Psoas muscle (tissue), 8 donors: ENCODE measurements at regions of chr6 and their contacts with region 1.

Region 1: DNA sequence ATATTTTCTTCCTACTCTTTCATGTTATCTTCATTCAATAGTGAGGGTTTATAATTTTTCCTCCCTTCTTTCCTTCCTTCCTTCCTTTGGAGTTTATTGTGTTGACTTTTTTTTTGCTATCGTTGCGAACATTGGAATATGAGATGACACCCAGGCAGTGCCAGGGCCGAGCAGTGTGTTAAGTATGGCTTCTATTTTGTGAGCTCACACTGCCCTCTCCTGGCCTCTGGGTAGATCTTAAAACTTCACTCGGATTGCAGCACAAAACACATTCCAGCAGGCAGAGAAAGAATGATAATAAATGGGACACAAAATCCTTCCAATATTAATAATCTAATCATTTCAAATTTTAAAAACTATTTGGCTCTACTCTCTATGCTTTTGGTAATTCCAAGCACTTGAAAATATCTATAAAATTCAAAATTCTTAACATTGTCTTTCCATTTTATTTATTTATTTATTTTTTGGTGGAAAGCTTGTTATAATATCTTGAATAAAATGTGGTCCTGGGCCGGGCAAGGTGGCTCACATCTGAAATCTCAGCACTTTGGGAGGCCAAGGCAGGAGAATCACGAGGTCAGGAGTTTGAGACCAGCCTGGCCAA is 147.4 kb upstream of the OLIG3 start:
- DNase-seq: peak; percentile 55 to 77
- ATAC-seq: peak; percentile 88 to 97 (median 92)
- H3K4me3 ChIP-seq: no peak overlapping the region
- H3K27ac ChIP-seq: no peak overlapping the region
- H3K4me1 ChIP-seq: peaks cover 10% of the 10 kb centered on the region
- H3K27me3 ChIP-seq: no peaks in the 10 kb centered on the region
- CTCF ChIP-seq: peak; percentile 77

Region 2: DNA sequence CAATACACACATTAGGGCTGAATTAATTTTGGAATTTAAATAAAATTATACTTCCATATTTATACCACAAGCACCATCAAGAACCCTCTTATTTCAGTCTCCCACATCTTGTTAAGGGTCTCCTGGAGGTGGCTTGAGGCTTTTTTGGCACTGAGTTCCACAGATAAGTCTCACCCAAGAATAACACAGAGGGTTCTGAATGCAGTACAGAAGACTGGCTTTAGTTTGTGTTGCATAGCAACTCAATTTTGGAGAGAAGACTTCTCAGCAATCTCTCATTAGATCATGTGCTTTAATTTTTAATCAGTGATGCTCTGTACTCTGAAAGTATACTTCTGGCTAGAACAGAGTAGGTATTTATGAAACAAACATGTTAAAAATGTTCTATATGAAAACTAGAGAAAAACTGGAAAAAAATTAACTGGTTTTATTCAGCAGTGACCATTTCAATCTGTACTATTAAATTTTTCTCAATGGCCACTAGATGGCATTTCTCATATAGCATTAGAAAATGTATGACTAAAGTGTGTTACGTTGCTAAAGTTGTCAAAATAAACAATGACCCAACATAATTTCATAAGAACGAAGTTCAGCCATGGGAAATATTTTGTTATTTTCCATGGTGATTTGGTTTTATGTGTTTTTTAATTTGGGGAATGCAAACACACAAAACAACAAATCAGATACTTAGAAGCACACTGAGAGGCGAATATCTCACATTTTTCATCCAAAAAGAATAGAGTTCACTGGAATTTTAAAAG is 1058.7 kb before region 1 on chr6:
- intact Hi-C with region 1: loop called in 1 of 2 experiments (anchors 10 kb)
- DNase-seq: no peak
- ATAC-seq: peak in 2 of 4 donors; percentile 55 to 77
- H3K4me3 ChIP-seq: peak overlapping the region; percentile 16
- H3K27ac ChIP-seq: peak overlapping the region; percentile 60
- H3K4me1 ChIP-seq: peaks cover 25% of the 10 kb centered on the region
- H3K27me3 ChIP-seq: no peaks in the 10 kb centered on the region
- CTCF ChIP-seq: peak; percentile 65

Region 3: DNA sequence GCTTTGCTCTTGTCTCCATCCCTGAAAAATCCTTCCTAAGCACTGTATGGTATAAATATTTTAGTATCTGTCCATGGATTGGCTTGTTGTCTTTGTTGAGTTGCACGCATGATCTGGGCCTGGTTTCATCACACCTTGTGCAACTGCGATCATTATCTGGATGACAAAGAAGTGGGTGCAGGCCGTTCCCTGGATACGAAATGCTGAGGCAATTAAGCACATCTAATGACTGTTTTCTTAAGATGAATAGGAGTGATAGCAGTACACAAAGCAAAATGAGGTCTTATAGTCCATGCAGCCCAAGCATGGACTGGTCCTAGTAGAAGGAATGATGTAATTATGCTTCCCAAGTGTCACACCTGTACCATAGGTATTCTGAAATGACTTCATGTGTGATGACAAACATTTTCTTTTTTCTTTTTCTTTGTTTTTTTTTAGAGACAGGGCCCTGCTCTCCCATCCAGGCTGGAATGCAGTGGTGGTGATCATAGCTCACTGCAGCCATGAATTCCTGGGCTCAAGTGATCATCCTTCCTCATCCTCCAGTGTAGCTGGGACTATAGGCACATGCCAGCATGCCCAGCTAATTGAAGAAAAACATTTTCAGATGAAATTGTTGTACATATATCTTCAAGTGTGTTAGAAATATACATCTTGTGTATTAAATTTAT is 671.5 kb before region 1 on chr6:
- intact Hi-C with region 1: loop called in 1 of 2 experiments (anchors 5 kb)
- DNase-seq: no peak
- ATAC-seq: no peak
- H3K4me3 ChIP-seq: no peak overlapping the region
- H3K27ac ChIP-seq: no peak overlapping the region
- H3K4me1 ChIP-seq: no peaks in the 10 kb centered on the region
- H3K27me3 ChIP-seq: no peaks in the 10 kb centered on the region
- CTCF ChIP-seq: no peak

Region 4: GRCh38 chr6:137094411-137095008 is 547.1 kb before region 1 on chr6:
- intact Hi-C with region 1: loop called (anchors 2 to 5 kb)
- DNase-seq: peak; percentile 39 to 70
- ATAC-seq: peak in 3 of 4 donors; percentile 59 to 85 (median 75)
- H3K4me3 ChIP-seq: no peak overlapping the region
- H3K27ac ChIP-seq: no peak overlapping the region
- H3K4me1 ChIP-seq: no peaks in the 10 kb centered on the region
- H3K27me3 ChIP-seq: no peaks in the 10 kb centered on the region
- CTCF ChIP-seq: peak; percentile 74

Region 5: DNA sequence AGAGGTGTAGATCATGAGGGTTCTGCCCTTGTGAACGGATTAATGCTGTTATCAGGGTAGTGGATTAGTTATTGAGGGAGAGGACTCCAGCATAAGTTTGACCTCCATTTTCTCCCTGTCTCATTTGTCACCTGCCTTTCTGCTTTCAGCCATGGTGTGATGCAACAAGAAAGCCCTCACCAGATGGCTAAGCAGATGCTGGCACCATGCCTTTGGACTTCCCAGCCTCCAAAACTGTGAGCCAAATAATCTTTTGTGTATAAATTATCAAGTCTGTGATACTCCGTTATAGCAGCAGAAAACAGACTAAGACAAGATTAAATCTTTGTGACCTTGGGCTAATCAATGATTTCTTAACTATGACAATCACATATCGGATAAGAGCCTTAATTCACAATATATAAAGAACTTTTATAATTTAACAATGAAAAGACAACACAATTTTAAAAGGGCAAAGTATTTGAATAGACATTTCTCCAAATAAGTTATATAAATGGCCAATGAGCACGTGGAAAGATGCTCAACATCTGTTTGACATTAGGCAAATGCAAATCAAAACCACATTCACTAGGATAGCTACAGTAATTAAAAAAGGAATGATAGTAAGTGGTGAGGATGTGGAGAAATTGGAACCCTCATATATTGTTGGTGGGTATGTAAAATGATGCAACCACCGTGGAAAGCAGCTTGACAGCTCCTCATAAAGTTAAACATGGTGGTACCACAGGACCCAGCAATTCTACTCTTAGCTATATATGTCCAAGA is 377.1 kb before region 1 on chr6:
- intact Hi-C with region 1: loop called in 1 of 2 experiments (anchors 5 kb)
- DNase-seq: peak; percentile 25 to 61
- ATAC-seq: no peak
- H3K4me3 ChIP-seq: no peak overlapping the region
- H3K27ac ChIP-seq: no peak overlapping the region
- H3K4me1 ChIP-seq: peaks cover 3% of the 10 kb centered on the region
- H3K27me3 ChIP-seq: no peaks in the 10 kb centered on the region
- CTCF ChIP-seq: no peak

Region 6: GRCh38 chr6:137271245-137272183 is 370.1 kb before region 1 on chr6:
- intact Hi-C with region 1: loop called (anchors 5 kb)
- DNase-seq: no peak
- ATAC-seq: peak in 3 of 4 donors; percentile 70 to 84 (median 76)
- H3K4me3 ChIP-seq: no peak overlapping the region
- H3K27ac ChIP-seq: no peak overlapping the region
- H3K4me1 ChIP-seq: no peaks in the 10 kb centered on the region
- H3K27me3 ChIP-seq: no peaks in the 10 kb centered on the region
- CTCF ChIP-seq: peak; percentile 93

Region 7: DNA sequence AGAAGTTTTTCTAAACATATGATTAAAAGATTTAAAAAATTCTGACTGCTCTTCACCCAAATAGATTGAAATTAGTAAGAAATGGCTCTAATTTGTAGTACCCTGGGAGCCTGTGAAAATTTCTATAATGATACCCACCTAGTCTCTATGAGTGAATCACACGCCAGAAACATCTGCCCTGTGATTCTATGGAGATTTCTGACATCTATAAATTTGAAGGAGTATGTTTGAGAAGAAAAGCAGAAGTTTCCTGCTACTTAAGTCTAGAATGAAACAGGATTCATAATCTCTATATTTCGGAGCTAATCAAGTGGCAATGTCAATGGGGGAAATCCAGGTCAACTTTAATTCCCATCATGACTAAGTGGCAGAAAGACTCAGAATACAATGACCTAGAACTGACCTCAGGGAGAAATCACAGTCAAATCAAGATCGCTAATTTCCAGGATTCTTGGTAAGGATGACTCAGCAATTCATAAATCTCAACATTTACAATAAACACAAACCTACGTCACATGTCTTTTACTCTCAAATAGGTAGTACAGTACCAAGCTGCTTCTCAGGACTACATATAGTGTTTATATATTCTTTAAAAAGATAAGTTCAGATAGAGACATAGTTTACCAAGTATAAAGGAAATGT is 39.2 kb after region 1 on chr6:
- intact Hi-C with region 1: no loop called
- DNase-seq: no peak
- ATAC-seq: no peak
- H3K4me3 ChIP-seq: no peak overlapping the region
- H3K27ac ChIP-seq: no peak overlapping the region
- H3K4me1 ChIP-seq: no peaks in the 10 kb centered on the region
- H3K27me3 ChIP-seq: no peaks in the 10 kb centered on the region
- CTCF ChIP-seq: no peak

Region 8: DNA sequence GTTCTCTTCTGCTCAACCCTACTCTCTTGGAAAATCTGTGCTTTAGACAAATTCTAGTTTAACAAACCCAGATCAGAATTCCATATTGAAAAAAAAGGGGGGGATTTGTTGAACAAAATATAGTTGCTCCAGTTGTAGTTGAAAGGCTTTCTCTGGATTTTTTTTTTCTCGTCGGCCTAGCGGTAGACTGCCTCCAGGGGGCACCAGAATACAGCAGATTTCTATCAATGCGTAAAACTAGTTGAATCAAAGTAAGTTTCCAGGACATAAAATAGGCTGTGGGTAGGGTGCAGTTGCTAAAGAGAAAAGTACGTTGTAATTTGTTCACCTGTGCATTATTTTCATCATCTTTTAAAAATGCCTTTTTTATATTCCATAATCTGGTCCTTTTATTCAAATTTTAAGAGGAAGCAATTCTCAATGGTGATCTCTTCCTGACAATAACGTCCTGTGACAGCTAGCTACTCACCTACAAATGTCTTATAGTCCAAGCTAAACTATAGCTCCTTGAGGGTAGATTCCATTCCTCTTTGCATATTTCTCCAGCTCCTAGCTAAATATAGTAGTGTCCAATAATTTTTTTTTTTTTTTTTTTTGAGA is 360.3 kb after region 1 on chr6:
- intact Hi-C with region 1: no loop called
- DNase-seq: peak in 1 of 2 donors; percentile 28
- ATAC-seq: peak in 2 of 4 donors; percentile 55 to 70
- H3K4me3 ChIP-seq: no peak overlapping the region
- H3K27ac ChIP-seq: no peak overlapping the region
- H3K4me1 ChIP-seq: no peaks in the 10 kb centered on the region
- H3K27me3 ChIP-seq: no peaks in the 10 kb centered on the region
- CTCF ChIP-seq: peak; percentile 81